Activated CD4-positive, alpha-beta T cell treated with anti-CD3 and anti-CD28 coated beads, Interleukin-2, amount 10 ng/mL, durations not matched to agents 24 days and 14 days (primary cell): ENCODE measurements at regions of chr3 and their contacts with region 1.

Region 1: DNA sequence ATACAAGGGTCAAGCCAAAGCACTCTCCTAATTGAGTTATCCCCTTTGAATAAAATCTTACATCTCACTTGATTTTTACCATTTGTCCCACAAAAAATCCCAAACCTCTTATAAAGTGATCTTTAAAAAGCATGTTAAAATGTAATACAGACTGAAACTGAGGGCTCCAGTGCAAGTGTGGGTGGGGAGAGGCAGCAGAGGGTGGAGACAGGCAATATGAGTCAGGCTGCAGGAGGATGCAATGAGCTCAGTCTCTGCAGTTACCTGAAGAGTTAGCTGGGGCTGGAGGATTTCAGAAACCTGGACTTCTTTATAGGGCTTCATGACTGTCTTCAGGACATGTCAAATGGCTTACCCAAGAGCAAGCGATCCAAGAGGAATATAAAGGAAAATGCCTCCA is 14.2 kb upstream of the COLQ start:
- DNase-seq: peak; percentile 86
- H3K4me3 Mint-ChIP-seq: peak overlapping the region; percentile 76
- H3K27ac Mint-ChIP-seq: peak overlapping the region; percentile 91
- H3K4me1 Mint-ChIP-seq: peaks cover 54% of the 10 kb centered on the region
- H3K27me3 Mint-ChIP-seq: no peaks in the 10 kb centered on the region

Region 2: DNA sequence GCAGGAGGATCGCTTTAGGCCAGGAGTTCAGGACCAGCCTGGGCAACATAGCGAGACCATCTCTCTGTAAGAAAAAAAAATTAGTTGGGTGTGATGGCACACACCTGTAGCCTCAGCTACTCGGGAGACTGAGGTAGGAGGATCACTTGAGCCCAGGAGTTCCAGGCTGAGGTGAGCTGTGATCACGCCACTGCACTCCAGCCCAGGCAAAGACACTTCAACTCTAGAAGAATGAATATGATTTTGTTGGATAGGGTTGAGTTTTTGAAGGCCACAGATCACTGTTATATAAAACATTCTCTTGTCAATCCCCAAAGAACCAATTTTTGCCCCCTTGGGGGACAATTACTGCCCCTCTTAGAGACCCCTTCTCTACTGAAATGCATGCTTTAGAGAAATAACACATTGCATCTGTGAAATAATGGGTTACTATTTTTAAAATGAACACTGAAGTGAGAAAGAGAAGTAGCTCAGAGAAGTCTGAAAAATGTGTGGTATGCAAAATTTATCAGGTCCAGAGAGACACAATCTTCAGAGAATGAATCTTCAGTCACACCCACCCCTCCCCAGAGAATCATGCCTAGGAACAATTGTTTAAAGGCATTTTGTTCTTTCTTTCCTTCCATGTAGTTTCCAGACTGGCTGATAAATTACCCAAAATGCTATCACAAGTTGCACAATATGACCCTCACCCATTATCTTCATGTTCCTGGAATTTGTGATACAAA is 151.1 kb before region 1 on chr3:
- intact Hi-C with region 1: no loop called
- DNase-seq: no peak
- H3K4me3 Mint-ChIP-seq: no peak overlapping the region
- H3K27ac Mint-ChIP-seq: no peak overlapping the region
- H3K4me1 Mint-ChIP-seq: peaks cover 7% of the 10 kb centered on the region
- H3K27me3 Mint-ChIP-seq: peaks cover 4% of the 10 kb centered on the region

Region 3: GRCh38 chr3:15427182-15427880 is 108.4 kb before region 1 on chr3 and contains the starts of genes EAF1 and METTL6:
- intact Hi-C with region 1: loop called (anchors 5 kb)
- DNase-seq: peak; percentile 96
- H3K4me3 Mint-ChIP-seq: peak within 1 kb of the TSS; percentile 96
- H3K27ac Mint-ChIP-seq: peak within 1 kb of the TSS; percentile 95
- H3K4me1 Mint-ChIP-seq: peaks cover 47% of the 10 kb centered on the region
- H3K27me3 Mint-ChIP-seq: no peaks in the 10 kb centered on the region
- total RNA-seq, gene EAF1: 24.2 and 25.7 TPM in 2 replicates
- total RNA-seq, gene METTL6: 15.2 and 17.4 TPM in 2 replicates

Region 4: GRCh38 chr3:15500107-15500724 is 35.5 kb before region 1 on chr3:
- intact Hi-C with region 1: loop called (anchors 1 kb)
- DNase-seq: no peak
- H3K4me3 Mint-ChIP-seq: peak overlapping the region; percentile 3
- H3K27ac Mint-ChIP-seq: peak overlapping the region; percentile 17
- H3K4me1 Mint-ChIP-seq: peaks cover 40% of the 10 kb centered on the region
- H3K27me3 Mint-ChIP-seq: no peaks in the 10 kb centered on the region